Tibial artery (tissue), 4 donors: ENCODE measurements at regions of chr20 and their contacts with region 1.

Region 1: GRCh38 chr20:63183422-63184348 is 32.2 kb downstream of the YTHDF1 start:
- DNase-seq: no peak
- H3K4me3 ChIP-seq: no peak overlapping the region
- H3K27ac ChIP-seq: no peak overlapping the region
- H3K4me1 ChIP-seq: peaks cover 0 to 10% (median 9%) of the 10 kb centered on the region in 4 donors
- H3K27me3 ChIP-seq: peaks cover 0 to 57% of the 10 kb centered on the region in 2 donors
- CTCF ChIP-seq: peak; percentile 30 to 49

Region 2: GRCh38 chr20:63056236-63056948 is 127.3 kb before region 1 on chr20:
- intact Hi-C with region 1: loop called (anchors 5 kb)
- DNase-seq: peak in 1 of 2 donors; percentile 61
- H3K4me3 ChIP-seq: no peak overlapping the region
- H3K27ac ChIP-seq: no peak overlapping the region
- H3K4me1 ChIP-seq: peaks cover 0 to 8% (median 3%) of the 10 kb centered on the region in 4 donors
- H3K27me3 ChIP-seq: peaks cover 0 to 73% of the 10 kb centered on the region in 2 donors
- CTCF ChIP-seq: peak; percentile 74 to 78